HepG2 (cell line): ENCODE measurements at regions of chr13 and their contacts with region 1.

Region 1: DNA sequence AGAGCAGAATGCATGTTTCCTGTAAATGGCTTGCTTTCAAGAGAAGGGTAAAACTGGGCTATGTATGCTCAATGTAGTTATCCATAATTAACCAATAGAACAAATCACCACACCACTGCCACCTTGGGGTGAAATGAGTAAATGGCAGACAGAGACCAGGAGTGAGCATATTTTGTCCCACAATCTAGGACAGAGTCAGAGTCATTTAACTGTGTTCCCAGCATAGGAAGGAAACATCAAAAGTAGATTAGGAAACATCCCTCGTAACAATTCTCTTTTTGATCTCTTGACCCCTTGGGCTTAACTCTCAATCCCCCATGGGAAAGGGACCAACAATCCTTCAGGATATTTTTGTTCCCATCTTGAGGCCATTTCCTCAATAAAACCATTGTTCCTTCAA is 224.8 kb downstream of the NHLRC3 start:
- DNase-seq: peak; percentile 23
- ATAC-seq: peak; percentile 89
- H3K4me3 ChIP-seq: no peak overlapping the region
- H3K27ac ChIP-seq: no peak overlapping the region
- H3K4me1 ChIP-seq: no peaks in the 10 kb centered on the region
- H3K27me3 ChIP-seq: no peaks in the 10 kb centered on the region
- CTCF ChIP-seq: peak; percentile 60
- EP300 ChIP-seq: no peak
- POLR2A ChIP-seq: no peak
- RAD21 ChIP-seq: no peak

Region 2: DNA sequence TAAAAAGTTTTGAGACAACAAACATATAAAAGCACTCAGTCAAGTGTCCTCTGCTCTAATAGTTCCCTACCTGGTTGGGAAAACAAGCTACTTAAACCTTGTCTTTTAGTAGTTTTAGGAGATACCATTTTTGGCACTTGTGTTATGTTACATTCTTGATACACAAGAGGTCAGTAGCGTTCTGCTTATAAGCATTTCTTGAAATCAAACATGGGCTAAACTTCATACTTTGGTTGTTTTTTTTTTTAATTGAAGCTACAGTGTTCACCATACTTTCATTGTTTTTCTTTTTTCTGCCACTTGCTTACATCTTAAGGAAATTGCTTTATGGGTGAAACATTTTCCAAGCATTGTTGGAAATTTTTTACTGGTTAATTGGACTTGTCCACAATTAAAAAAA is 211.9 kb before region 1 on chr13:
- CTCF ChIA-PET with region 1: no interaction called
- POLR2A ChIA-PET with region 1: no interaction called
- in situ Hi-C with region 1: no loop called
- intact Hi-C with region 1: loop called (anchors 1 kb)
- DNase-seq: peak; percentile 13
- ATAC-seq: no peak
- H3K4me3 ChIP-seq: no peak overlapping the region
- H3K27ac ChIP-seq: no peak overlapping the region
- H3K4me1 ChIP-seq: no peaks in the 10 kb centered on the region
- H3K27me3 ChIP-seq: no peaks in the 10 kb centered on the region
- CTCF ChIP-seq: peak; percentile 32; the same call in 1 of the 2 replicates
- EP300 ChIP-seq: no peak
- POLR2A ChIP-seq: no peak
- RAD21 ChIP-seq: no peak

Region 3: DNA sequence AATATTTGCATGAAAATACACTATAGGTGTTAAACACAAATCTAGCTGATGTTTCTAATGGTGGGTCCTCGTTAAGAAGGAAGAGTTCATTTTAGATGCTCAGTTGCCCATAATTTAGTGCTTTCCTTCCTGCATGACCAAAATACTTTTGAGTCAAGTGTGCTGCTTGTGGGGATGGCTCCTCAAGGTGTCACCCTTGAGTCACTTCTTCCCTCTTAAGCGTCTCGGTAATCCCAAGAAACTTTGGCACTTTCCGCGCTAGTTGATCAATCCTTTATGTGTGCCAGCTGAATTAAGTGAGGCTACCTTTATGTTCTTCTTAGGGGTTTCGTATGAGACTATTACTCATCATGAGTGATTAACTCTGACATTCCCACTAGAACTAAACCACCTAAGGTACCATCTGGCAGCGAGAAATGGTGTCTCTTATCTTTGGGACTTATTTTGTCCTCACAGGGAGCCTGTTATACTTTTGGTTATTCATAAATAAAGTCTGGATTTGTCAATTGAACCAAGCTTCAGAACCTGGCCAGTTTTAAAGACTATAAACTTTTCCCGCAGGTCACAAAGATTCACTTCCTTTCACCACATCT is 118.0 kb before region 1 on chr13:
- CTCF ChIA-PET with region 1: no interaction called
- POLR2A ChIA-PET with region 1: no interaction called
- in situ Hi-C with region 1: no loop called
- intact Hi-C with region 1: loop called (anchors 5 kb)
- DNase-seq: no peak
- ATAC-seq: peak; percentile 44; the same call in 1 of the 3 replicates
- H3K4me3 ChIP-seq: no peak overlapping the region
- H3K27ac ChIP-seq: no peak overlapping the region
- H3K4me1 ChIP-seq: no peaks in the 10 kb centered on the region
- H3K27me3 ChIP-seq: no peaks in the 10 kb centered on the region
- CTCF ChIP-seq: peak; percentile 61
- EP300 ChIP-seq: no peak
- POLR2A ChIP-seq: no peak
- RAD21 ChIP-seq: no peak

Region 4: GRCh38 chr13:39159393-39159792 is 103.6 kb before region 1 on chr13:
- CTCF ChIA-PET with region 1: no interaction called
- POLR2A ChIA-PET with region 1: no interaction called
- in situ Hi-C with region 1: no loop called
- intact Hi-C with region 1: no loop called
- DNase-seq: no peak
- ATAC-seq: no peak
- H3K4me3 ChIP-seq: no peak overlapping the region
- H3K27ac ChIP-seq: no peak overlapping the region
- H3K4me1 ChIP-seq: no peaks in the 10 kb centered on the region
- H3K27me3 ChIP-seq: no peaks in the 10 kb centered on the region; a peak in 1 of 5 replicates
- CTCF ChIP-seq: no peak
- EP300 ChIP-seq: no peak
- POLR2A ChIP-seq: no peak
- RAD21 ChIP-seq: no peak

Region 5: DNA sequence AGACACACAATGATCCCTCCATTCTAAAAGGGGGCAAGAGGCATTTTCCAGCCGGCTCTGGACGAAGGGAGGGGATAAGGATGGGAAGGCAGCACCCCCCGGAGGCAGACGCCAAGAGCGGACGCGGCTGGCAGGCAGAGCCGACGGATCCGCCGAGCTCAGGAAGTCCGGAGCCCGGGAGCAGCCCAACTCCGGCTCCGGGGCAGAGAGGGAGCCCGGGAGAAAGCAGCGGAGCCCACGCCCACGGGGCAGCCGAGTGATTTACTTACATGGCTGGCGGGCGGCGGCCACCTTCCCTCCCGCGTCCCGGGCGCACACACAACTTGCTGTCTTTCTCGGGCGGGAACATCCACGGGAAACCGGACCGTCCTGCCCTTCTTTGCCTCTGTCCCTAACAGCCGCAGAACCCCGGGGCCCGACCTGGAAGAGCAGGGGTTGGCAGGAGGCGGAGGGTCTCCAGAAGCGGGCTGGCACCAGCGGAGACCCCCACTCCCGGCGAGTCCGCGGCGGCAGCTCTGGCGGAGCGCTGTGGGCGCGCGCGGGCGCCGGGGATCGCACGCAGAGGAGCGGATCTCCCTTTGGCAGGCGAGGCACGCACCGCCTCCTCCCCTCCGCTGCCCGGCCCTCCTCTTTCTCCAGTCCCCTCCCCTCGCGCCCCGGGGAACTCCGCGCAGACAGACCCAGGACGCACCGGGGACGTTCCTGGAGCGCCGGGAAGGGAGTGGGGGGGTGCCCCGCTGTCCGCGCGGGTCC is 339.8 kb after region 1 on chr13 and contains the start of gene LHFPL6:
- CTCF ChIA-PET with region 1: no interaction called
- POLR2A ChIA-PET with region 1: no interaction called
- in situ Hi-C with region 1: loop called (anchors 25 kb)
- intact Hi-C with region 1: no loop called
- DNase-seq: peak; percentile 3
- ATAC-seq: peak; percentile 96
- H3K4me3 ChIP-seq: peak within 1 kb of the TSS; percentile 50 to 72 (median 52); a peak in 5 of 6 replicates
- H3K27ac ChIP-seq: no peak within 1 kb of the TSS
- H3K4me1 ChIP-seq: peaks cover 6% of the 10 kb centered on the region
- H3K27me3 ChIP-seq: peaks cover 4 to 43% of the 10 kb centered on the region in 2 experiments; a peak in 4 of 5 replicates
- CTCF ChIP-seq: peak; percentile 36
- EP300 ChIP-seq: no peak
- POLR2A ChIP-seq: no peak
- RAD21 ChIP-seq: no peak
- total RNA-seq, gene LHFPL6: not detected in 2 replicates

Region 6: DNA sequence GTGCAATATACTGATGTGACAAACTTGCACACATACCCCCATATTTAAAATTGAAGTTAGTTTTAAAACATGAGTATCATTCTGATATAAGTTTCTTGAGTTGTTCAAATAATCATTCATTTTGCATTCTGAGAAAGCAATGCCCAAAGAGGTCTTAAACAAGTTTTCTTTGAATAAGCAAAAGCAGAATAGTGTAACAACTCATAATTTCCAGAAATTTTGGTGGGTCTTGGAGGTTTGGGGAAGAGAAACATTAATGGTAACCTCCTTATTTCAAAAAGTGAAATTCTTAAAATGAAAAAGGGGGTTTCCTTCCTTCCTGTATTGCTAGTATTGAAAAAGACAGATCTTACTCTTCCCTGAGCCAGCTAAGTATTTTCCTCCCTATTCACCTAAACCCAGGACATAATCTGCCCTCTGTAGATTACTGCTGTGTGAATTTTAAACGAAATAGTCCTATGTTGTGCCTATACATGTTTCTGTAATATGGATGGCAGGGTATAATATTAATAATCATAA is 1556.8 kb after region 1 on chr13:
- CTCF ChIA-PET with region 1: no interaction called
- POLR2A ChIA-PET with region 1: no interaction called
- in situ Hi-C with region 1: no loop called
- intact Hi-C with region 1: loop called (anchors 5 kb)
- DNase-seq: no peak
- ATAC-seq: no peak
- H3K4me3 ChIP-seq: no peak overlapping the region
- H3K27ac ChIP-seq: no peak overlapping the region
- H3K4me1 ChIP-seq: no peaks in the 10 kb centered on the region
- H3K27me3 ChIP-seq: no peaks in the 10 kb centered on the region
- CTCF ChIP-seq: no peak
- EP300 ChIP-seq: no peak
- POLR2A ChIP-seq: no peak
- RAD21 ChIP-seq: no peak